A549 (cell line): ENCODE measurements at regions of chr11 and their contacts with region 1.

Region 1: GRCh38 chr11:12079726-12080556 is 30.4 kb upstream of the MICAL2 start:
- DNase-seq: peak; percentile 82 to 96
- ATAC-seq: peak; percentile 64 to 69
- H3K4me3 ChIP-seq: no peak overlapping the region
- H3K27ac ChIP-seq: peak overlapping the region; percentile 97
- H3K4me1 ChIP-seq: peaks cover 58% of the 10 kb centered on the region
- CTCF ChIP-seq: no peak
- EP300 ChIP-seq: peak; percentile 94; a peak in 4 of 5 replicates
- POLR2A ChIP-seq: no peak
- RAD21 ChIP-seq: peak; percentile 32 to 62

Region 2: DNA sequence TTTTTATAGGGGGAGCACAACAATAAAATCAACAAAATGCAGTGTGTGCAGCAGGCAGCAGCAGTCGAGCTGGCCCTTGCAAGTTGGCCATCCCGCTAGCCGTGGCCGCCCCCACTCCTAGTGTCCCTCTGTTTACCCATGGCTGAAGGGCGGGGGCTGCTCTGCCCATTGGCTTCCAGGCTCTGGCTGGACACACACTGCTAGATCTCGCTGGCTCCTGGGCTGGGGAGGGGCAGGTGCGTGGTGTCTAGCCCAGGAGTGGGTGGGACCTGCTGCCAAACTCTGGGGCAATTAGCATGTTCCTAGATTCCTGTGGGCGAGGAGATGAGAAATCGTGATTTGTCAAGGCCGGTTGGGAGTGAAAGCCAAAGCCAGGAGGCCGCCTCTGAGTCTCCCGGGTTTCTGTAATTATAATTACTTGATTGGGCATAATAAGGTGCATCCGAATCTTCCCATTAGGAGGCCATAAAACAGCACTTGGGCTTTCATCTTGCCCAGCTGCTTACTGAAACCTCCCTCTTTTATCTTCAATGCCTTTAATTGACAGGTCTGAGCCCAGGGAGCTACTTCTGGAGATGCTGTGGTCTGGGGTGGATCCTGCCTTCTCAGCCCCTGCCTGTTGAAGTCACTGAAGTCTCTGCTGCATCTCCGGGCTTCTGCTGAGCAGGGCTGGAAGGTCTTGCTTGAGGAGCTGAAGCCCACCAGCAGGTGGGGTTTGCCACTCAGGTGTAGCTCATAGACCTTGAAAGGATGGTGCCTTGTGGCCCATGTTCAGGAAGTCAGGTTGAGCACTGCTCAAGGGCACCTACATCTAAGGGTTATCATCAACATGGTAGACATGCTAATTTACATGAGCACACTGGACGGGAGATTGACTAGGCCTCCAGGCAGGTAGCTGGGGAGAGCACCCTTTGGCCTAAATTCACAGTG is 27.0 kb before region 1 on chr11:
- CTCF ChIA-PET with region 1: interaction called, 25 read pairs
- POLR2A ChIA-PET with region 1: no interaction called
- DNase-seq: peak in 1 of 2 experiments; percentile 57
- ATAC-seq: peak in 1 of 2 experiments; percentile 48; a peak in 3 of 6 replicates
- H3K4me3 ChIP-seq: no peak overlapping the region
- H3K27ac ChIP-seq: peak overlapping the region; percentile 77 to 83
- H3K4me1 ChIP-seq: peaks cover 46% of the 10 kb centered on the region
- CTCF ChIP-seq: no peak
- EP300 ChIP-seq: no peak
- POLR2A ChIP-seq: no peak
- RAD21 ChIP-seq: peak; percentile 33 to 48; a peak in 4 of 5 replicates

Region 3: DNA sequence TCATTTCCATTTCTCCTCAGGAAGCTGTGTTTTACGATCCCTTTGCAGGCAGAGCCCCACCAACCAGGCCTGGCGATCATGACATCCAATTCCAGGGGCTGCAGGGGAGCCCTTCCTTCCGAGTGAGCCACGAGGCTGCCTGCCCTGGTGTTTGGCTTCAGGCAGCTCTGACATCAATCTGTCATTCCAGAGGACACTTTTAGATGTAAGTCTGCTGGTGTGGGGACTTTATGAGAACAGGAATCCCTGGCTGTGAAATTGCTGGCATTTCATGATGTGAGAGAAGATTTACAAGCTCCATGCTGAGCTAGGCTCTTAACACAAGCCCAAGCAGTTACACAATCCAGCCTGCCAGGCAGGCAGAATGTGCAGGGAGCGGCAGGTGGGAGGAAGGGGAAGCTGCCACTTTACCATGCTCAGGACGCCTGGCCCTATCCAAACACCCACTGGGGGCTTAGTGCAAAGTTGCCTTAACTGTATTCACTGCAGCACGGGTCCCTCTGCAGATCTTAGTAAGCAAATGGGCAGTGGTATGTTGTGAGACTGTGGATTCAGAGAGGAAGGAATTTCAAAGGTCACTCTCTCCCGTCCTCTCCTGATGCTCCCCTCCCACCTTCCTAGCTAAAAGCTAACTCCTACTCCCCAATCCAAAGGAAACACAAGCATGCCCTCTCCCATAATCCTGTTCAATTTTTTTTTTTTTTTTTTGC is 13.0 kb before region 1 on chr11:
- CTCF ChIA-PET with region 1: interaction called, 37 read pairs
- POLR2A ChIA-PET with region 1: interaction called, 27 read pairs
- DNase-seq: peak in 1 of 2 experiments; percentile 93
- ATAC-seq: peak; percentile 83 to 84
- H3K4me3 ChIP-seq: peak overlapping the region; percentile 8; the same call in 1 of the 3 replicates
- H3K27ac ChIP-seq: peak overlapping the region; percentile 97
- H3K4me1 ChIP-seq: peaks cover 66% of the 10 kb centered on the region
- CTCF ChIP-seq: no peak
- EP300 ChIP-seq: peak; percentile 51 to 79; a peak in 3 of 5 replicates
- POLR2A ChIP-seq: no peak
- RAD21 ChIP-seq: no peak

Region 4: GRCh38 chr11:12331239-12331874 is 251.4 kb after region 1 on chr11:
- CTCF ChIA-PET with region 1: no interaction called
- POLR2A ChIA-PET with region 1: no interaction called
- DNase-seq: peak; percentile 47 to 83
- ATAC-seq: peak; percentile 95 to 97
- H3K4me3 ChIP-seq: no peak overlapping the region
- H3K27ac ChIP-seq: no peak overlapping the region
- H3K4me1 ChIP-seq: peaks cover 8% of the 10 kb centered on the region; the same call in 1 of the 3 replicates
- CTCF ChIP-seq: peak; percentile 94
- EP300 ChIP-seq: no peak
- POLR2A ChIP-seq: no peak
- RAD21 ChIP-seq: peak; percentile 97 to 98